Heart right ventricle (tissue), 16 donors: ENCODE measurements at regions of chr11 and their contacts with region 1.

Region 1: GRCh38 chr11:69683764-69684333 is 8.7 kb upstream of the LTO1 start:
- DNase-seq: no peak
- ATAC-seq: no peak
- H3K4me3 ChIP-seq: no peak overlapping the region
- H3K27ac ChIP-seq: no peak overlapping the region
- H3K4me1 ChIP-seq: peaks cover 0 to 8% (median 6%) of the 10 kb centered on the region in 9 donors
- H3K27me3 ChIP-seq: peaks cover 0 to 29% (median 14%) of the 10 kb centered on the region in 7 donors
- CTCF ChIP-seq: peak in 7 of 9 donors; percentile 24 to 32 (median 29)

Region 2: DNA sequence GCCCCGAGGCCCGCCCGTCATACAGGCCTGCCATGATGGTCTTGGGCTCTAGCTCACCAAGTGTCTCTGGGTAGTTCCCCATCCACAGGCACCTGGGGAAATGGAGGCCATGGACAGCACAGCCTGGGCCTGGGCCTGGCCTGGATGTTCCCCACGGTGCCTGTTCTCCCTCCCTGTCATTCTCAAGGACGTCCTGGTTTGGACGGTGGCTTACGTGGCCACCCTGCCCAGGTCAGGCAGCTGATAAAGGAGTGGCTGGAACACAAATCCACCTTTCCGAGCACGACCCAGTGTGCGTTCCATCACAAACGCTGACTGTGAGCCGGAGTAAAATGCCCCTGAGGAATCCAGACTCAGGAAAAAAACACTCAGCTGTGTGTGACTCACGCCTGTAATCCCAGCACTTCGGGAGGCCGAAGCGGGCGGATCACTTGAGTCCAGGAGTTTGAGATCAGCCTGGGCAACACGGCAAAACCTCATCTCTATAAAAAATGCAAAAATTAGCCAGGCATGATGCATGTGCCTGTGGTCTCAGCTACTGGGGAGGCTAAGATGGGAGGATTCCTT is 891.4 kb before region 1 on chr11:
- intact Hi-C with region 1: no loop called
- DNase-seq: no peak
- ATAC-seq: peak in 3 of 8 donors; percentile 36 to 66 (median 66)
- H3K4me3 ChIP-seq: no peak overlapping the region
- H3K27ac ChIP-seq: no peak overlapping the region
- H3K4me1 ChIP-seq: peaks cover 0 to 8% (median 0%) of the 10 kb centered on the region in 9 donors
- H3K27me3 ChIP-seq: no peaks in the 10 kb centered on the region
- CTCF ChIP-seq: no peak

Region 3: GRCh38 chr11:69598157-69598556 is 85.7 kb before region 1 on chr11:
- intact Hi-C with region 1: no loop called
- DNase-seq: peak in 1 of 2 donors; percentile 9
- ATAC-seq: no peak
- H3K4me3 ChIP-seq: no peak overlapping the region
- H3K27ac ChIP-seq: no peak overlapping the region
- H3K4me1 ChIP-seq: peaks cover 0 to 3% (median 0%) of the 10 kb centered on the region in 9 donors
- H3K27me3 ChIP-seq: peaks cover 0 to 3% (median 0%) of the 10 kb centered on the region in 7 donors
- CTCF ChIP-seq: peak in 7 of 9 donors; percentile 3 to 37 (median 31)

Region 4: DNA sequence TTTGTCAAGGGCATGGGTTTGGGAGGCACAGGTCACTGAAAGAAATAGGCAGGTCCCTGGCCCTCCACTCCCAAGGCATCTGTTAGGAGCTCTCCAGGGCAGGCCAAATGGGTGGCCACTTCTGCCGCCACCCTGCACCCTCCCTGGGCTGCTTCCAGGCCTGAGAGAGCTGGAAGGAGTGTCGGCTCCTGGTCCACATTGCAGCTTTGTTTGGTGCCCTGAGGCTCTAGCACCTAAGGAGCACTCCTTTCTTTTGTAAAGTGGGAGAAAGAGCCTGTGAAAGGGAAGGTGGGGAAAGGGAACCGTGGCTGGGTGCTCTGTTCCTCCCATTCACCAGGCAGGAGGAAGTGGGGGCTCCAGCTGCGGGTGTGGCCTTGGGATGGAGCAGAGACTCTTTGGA is 103.6 kb after region 1 on chr11:
- intact Hi-C with region 1: no loop called
- DNase-seq: no peak
- ATAC-seq: no peak
- H3K4me3 ChIP-seq: no peak overlapping the region
- H3K27ac ChIP-seq: no peak overlapping the region
- H3K4me1 ChIP-seq: no peaks in the 10 kb centered on the region
- H3K27me3 ChIP-seq: peaks cover 0 to 37% (median 4%) of the 10 kb centered on the region in 7 donors
- CTCF ChIP-seq: no peak

Region 5: DNA sequence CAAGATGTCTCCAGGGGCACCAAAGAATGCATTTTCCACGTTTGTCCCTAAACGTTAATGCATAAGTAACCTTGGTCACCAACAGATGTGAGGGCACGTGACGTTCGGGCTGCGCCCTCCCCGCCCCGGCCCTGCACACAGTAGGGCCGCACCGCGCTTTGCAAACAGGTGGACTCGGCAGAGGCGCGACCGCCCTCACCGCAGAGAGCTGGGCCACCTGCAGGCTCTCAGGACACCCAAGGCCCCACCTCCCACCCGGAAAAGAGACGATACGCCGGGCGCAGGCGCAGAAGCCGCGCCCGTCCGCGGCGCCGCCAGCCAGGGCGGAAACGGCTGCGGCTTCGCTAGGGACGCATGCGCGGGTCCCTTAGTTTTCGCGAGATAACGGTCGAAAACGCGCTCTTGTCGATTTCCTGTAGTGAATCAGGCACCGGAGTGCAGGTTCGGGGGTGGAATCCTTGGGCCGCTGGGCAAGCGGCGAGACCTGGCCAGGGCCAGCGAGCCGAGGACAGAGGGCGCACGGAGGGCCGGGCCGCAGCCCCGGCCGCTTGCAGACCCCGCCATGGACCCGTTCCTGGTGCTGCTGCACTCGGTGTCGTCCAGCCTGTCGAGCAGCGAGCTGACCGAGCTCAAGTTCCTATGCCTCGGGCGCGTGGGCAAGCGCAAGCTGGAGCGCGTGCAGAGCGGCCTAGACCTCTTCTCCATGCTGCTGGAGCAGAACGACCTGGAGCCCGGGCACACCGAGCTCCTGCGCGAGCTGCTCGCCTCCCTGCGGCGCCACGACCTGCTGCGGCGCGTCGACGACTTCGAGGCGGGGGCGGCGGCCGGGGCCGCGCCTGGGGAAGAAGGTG is 519.3 kb after region 1 on chr11 and contains the start of gene FADD:
- intact Hi-C with region 1: loop called in 4 of 10 experiments (anchors 2 to 5 kb)
- DNase-seq: peak; percentile 90
- ATAC-seq: peak; percentile 84 to 93 (median 89)
- H3K4me3 ChIP-seq: peak within 1 kb of the TSS; percentile 62 to 96 (median 94)
- H3K27ac ChIP-seq: peak within 1 kb of the TSS in 9 of 10 donors; percentile 88 to 98 (median 94)
- H3K4me1 ChIP-seq: peaks cover 8 to 40% (median 23%) of the 10 kb centered on the region in 9 donors
- H3K27me3 ChIP-seq: no peaks in the 10 kb centered on the region
- CTCF ChIP-seq: no peak
- total RNA-seq, gene FADD: 6.7 to 12.7 (median 9.0) TPM